ENCODE measurements at regions of chr15 and their contacts with region 1.

Region 1: DNA sequence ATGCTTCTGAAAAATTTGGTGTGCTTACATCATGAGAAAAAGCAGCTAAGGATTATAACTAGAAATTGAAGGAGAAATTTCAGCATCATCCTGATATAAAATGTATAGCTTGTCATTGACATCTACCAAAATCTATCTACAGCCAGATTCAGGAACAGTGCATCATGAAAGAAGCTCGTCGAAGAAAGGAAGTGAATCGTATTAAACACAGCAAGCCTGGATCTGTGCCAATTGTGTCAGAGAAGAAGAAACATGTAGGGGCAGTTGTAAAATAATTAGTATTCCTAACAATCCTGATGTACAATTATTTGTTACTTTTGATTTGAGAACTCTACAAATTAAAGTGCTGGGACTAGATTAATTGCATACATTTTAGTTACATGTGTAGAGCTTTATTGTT is 37.2 kb downstream of the AP4E1 start:
- DNase-seq: peak; percentile 28
- ATAC-seq: no peak
- H3K4me3 ChIP-seq: no peak overlapping the region
- H3K27ac ChIP-seq: no peak overlapping the region
- H3K4me1 ChIP-seq: 0 out of 2 replicates have a peak, but pooled peaks cover 2% of the 10 kb centered on the region
- H3K27me3 ChIP-seq: no peaks in the 10 kb centered on the region
- CTCF ChIP-seq: no peak
- POLR2A ChIP-seq: no peak
- RAD21 ChIP-seq: no peak

Region 2: GRCh38 chr15:50993598-50993997 is 47.9 kb after region 1 on chr15:
- CTCF ChIA-PET with region 1: no interaction called
- POLR2A ChIA-PET with region 1: interaction called, 4 read pairs
- dilution Hi-C with region 1: no loop called
- in situ Hi-C with region 1: no loop called
- intact Hi-C with region 1: loop called (anchors 5 kb)
- DNase-seq: peak; percentile 47
- ATAC-seq: no peak
- H3K4me3 ChIP-seq: no peak overlapping the region
- H3K27ac ChIP-seq: no peak overlapping the region
- H3K4me1 ChIP-seq: no peaks in the 10 kb centered on the region
- H3K27me3 ChIP-seq: no peaks in the 10 kb centered on the region
- CTCF ChIP-seq: no peak
- POLR2A ChIP-seq: no peak
- RAD21 ChIP-seq: no peak

Region 3: GRCh38 chr15:51267703-51268083 is 322.0 kb after region 1 on chr15:
- CTCF ChIA-PET with region 1: no interaction called
- POLR2A ChIA-PET with region 1: no interaction called
- dilution Hi-C with region 1: no loop called
- in situ Hi-C with region 1: no loop called
- intact Hi-C with region 1: no loop called
- DNase-seq: no peak
- ATAC-seq: peak; percentile 78
- H3K4me3 ChIP-seq: peak overlapping the region; percentile 6; the same call in 1 of the 2 replicates
- H3K27ac ChIP-seq: no peak overlapping the region
- H3K4me1 ChIP-seq: no peaks in the 10 kb centered on the region
- H3K27me3 ChIP-seq: peaks cover 72% of the 10 kb centered on the region
- CTCF ChIP-seq: no peak
- POLR2A ChIP-seq: no peak
- RAD21 ChIP-seq: no peak